GM18951 (cell line): ENCODE measurements at regions of chr19 and their contacts with region 1.

Region 1: GRCh38 chr19:14689598-14690503 is at the start of gene ZNF333:
- POLR2A ChIP-seq: peak; percentile 86

Region 2: GRCh38 chr19:14571695-14572490 is 118.0 kb before region 1 on chr19 and contains the start of gene NDUFB7:
- in situ Hi-C with region 1: loop called (anchors 5 kb)
- POLR2A ChIP-seq: peak; percentile 86